HepG2 (cell line): ENCODE measurements at regions of chr17 and their contacts with region 1.

Region 1: DNA sequence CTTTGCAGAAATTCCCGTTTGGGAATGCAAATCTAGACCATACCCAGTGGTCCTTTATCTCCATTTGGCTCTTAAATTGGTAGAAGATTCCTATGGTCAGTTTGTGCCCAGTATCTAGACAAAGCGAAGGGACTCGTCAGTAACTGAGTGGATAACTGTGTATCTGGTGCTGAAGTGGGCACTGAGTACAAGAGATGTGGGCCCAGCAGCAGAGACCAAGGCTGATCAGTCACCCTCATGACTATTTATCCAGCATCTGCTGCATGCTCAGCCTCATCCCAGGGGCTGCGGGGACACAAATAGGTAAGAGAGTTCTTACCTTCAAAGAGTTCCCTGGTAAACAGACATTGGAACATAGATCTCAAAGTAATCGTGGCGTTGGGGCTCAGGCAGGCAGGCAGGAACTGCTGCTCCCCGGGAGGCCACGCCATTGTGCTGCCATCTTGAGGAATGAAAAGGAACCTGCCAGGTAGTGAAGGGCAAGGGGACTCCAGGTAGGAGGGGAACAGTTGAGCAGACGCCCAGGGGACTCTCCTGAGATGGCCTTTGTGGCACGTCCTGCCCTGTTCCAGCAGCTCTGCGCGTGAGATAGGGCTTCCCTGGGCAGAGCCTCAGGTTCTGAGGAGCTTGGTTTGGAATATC is 10.3 kb downstream of the NT5M start:
- DNase-seq: peak; percentile 67
- ATAC-seq: peak; percentile 97
- H3K4me3 ChIP-seq: 0 out of 6 replicates have a peak overlapping the region, but pooled peaks of 1 of the 3 experiments have one; percentile 10
- H3K27ac ChIP-seq: no peak overlapping the region
- H3K4me1 ChIP-seq: peaks cover 10% of the 10 kb centered on the region; the same call in 1 of the 2 replicates
- H3K27me3 ChIP-seq: no peaks in the 10 kb centered on the region
- CTCF ChIP-seq: peak; percentile 91
- EP300 ChIP-seq: no peak
- POLR2A ChIP-seq: no peak
- RAD21 ChIP-seq: peak; percentile 63

Region 2: GRCh38 chr17:17001874-17002520 is 311.5 kb before region 1 on chr17:
- CTCF ChIA-PET with region 1: interaction called, 6 read pairs
- POLR2A ChIA-PET with region 1: no interaction called
- in situ Hi-C with region 1: loop called (anchors 10 kb)
- intact Hi-C with region 1: loop called (anchors 5 kb)
- DNase-seq: peak; percentile 48
- ATAC-seq: peak; percentile 88
- H3K4me3 ChIP-seq: peak overlapping the region in 1 of 3 experiments; percentile 55; a peak in 1 of 6 replicates
- H3K27ac ChIP-seq: no peak overlapping the region
- H3K4me1 ChIP-seq: peaks cover 19% of the 10 kb centered on the region
- H3K27me3 ChIP-seq: peaks cover 0 to 22% of the 10 kb centered on the region in 2 experiments; a peak in 4 of 5 replicates
- CTCF ChIP-seq: peak; percentile 91
- EP300 ChIP-seq: no peak
- POLR2A ChIP-seq: no peak
- RAD21 ChIP-seq: peak; percentile 93

Region 3: DNA sequence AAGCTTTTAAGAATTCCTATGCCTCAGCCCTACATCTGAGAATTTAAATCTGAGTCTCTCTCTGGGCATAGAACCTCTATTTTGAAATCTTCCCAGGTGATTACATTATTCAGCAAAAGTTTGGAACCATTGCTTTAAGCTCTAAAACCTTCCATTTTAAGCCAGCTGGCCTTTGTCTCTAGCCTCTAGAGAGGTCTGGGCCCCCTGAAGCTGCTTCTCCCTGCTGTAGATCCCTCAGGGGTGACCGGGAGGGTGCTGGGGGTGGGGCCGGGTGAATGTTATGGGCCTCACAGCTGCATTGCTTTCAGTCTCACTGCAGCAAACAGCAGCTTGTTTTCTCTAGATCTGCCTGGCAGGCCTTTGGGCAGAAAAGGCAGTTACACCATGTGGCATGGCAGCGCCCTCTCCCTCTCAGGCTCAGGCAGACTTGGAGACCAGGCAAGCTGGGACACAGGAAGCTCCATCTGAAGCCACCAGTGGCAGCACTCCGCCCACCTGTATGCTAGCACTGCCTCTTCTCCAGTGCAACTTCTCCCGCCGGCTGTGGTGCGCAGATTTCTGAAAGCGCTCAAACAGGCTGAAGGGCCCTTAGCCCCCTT is 204.9 kb before region 1 on chr17:
- CTCF ChIA-PET with region 1: no interaction called
- POLR2A ChIA-PET with region 1: no interaction called
- in situ Hi-C with region 1: no loop called
- intact Hi-C with region 1: no loop called
- DNase-seq: no peak
- ATAC-seq: peak; percentile 20; the same call in 1 of the 3 replicates
- H3K4me3 ChIP-seq: no peak overlapping the region
- H3K27ac ChIP-seq: no peak overlapping the region
- H3K4me1 ChIP-seq: peaks cover 7% of the 10 kb centered on the region
- H3K27me3 ChIP-seq: no peaks in the 10 kb centered on the region
- CTCF ChIP-seq: peak; percentile 21; the same call in 1 of the 2 replicates
- EP300 ChIP-seq: no peak
- POLR2A ChIP-seq: no peak
- RAD21 ChIP-seq: no peak

Region 4: DNA sequence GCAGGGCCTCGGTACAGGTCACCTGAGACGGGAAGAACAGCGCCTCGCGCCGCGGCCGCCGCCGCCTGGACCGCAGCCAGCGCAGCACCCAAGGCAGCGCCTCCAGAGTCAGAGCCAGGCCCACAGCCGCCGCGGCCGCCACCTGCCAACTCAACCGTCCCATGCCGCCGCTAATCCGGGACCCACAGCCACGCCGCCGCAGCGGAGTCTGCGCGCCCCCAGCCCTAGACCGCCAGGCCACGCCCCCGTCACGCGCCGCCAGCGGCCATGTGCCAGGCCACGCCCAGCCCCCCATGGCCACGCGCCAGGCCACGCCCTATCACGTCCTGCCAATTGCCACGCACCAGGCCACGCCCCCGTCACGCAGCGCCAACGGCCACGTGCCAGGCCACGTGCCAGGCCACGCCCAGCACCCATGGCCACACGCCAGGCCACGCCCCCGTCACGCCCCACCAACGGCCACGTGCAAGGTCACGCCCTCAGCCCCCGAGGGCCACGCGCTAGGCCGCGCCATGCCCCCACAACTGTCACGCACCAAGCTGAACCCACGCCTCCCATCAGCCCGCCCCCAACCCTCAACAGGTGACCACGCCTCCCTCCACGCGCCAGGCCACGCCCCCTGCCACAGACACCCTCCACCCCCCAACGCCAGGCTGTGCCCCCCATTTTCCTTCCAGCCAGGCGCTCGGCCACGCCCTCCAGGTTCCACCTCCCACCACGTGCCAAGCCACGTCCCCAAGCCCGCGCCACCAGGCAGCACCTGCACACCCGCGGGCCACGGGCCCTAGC is 107.2 kb before region 1 on chr17 and contains the start of gene PLD6:
- CTCF ChIA-PET with region 1: no interaction called
- POLR2A ChIA-PET with region 1: no interaction called
- in situ Hi-C with region 1: no loop called
- intact Hi-C with region 1: loop called (anchors 10 kb)
- DNase-seq: peak; percentile 67
- ATAC-seq: peak; percentile 76
- H3K4me3 ChIP-seq: peak within 1 kb of the TSS; percentile 75 to 85 (median 80)
- H3K27ac ChIP-seq: peak within 1 kb of the TSS; percentile 75
- H3K4me1 ChIP-seq: peaks cover 38% of the 10 kb centered on the region
- H3K27me3 ChIP-seq: no peaks in the 10 kb centered on the region; a peak in 1 of 5 replicates
- CTCF ChIP-seq: no peak; the same call in 1 of the 2 replicates
- EP300 ChIP-seq: no peak
- POLR2A ChIP-seq: peak; percentile 63 to 69; a peak in 3 of 4 replicates
- RAD21 ChIP-seq: peak; percentile 48
- total RNA-seq, gene PLD6: 6.4 and 11.4 TPM in 2 replicates

Region 5: DNA sequence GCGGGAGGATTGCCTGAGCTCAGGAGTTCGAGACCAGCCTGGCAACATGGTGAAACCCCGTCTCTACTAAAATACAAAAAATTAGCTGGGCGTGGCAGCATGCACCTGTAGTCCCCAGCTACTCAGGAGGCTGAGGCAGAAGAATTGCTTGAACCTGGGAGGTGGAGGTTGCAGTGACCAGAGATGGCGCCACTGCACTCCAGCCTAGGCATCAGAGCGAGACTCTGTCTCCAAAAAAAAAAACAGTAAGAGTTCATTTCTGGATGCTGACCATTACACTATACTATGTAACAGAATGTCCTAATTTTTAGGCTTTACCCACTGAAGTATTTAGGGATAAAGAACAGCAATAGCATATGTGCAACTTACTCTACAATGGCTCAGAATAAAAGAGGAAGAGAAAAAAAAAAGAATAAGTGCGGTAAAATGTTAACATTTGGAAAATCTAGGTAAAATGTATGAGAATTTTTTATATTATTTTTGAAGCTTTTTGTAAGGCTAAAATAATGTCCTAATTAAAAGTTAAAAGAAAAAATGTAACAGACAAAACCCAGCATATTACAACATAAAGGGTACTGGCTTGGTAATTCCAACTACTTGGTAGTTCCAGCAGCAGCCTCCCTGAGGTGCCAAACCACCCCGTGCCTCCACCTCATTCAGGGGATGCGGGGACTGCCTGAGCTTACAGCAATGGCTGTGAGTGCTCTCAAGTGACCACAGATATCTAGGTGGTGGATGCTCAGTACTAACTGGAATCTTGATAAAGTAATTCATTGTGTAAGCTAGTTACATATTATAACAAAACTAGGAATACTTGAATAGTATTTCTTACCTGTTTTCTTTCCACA is 43.3 kb before region 1 on chr17:
- CTCF ChIA-PET with region 1: interaction called, 4 read pairs
- POLR2A ChIA-PET with region 1: no interaction called
- in situ Hi-C with region 1: no loop called
- intact Hi-C with region 1: loop called (anchors 5 kb)
- DNase-seq: peak; percentile 30
- ATAC-seq: peak; percentile 44; the same call in 1 of the 3 replicates
- H3K4me3 ChIP-seq: no peak overlapping the region
- H3K27ac ChIP-seq: no peak overlapping the region
- H3K4me1 ChIP-seq: no peaks in the 10 kb centered on the region
- H3K27me3 ChIP-seq: no peaks in the 10 kb centered on the region
- CTCF ChIP-seq: peak; percentile 44
- EP300 ChIP-seq: no peak
- POLR2A ChIP-seq: no peak
- RAD21 ChIP-seq: no peak

Region 6: GRCh38 chr17:17280613-17281549 is 32.6 kb before region 1 on chr17 and contains the start of gene COPS3:
- CTCF ChIA-PET with region 1: no interaction called
- POLR2A ChIA-PET with region 1: no interaction called
- in situ Hi-C with region 1: no loop called
- intact Hi-C with region 1: no loop called
- DNase-seq: peak; percentile 95
- ATAC-seq: peak; percentile 96
- H3K4me3 ChIP-seq: peak within 1 kb of the TSS; percentile 77 to 93 (median 89)
- H3K27ac ChIP-seq: peak within 1 kb of the TSS; percentile 90
- H3K4me1 ChIP-seq: peaks cover 36% of the 10 kb centered on the region
- H3K27me3 ChIP-seq: no peaks in the 10 kb centered on the region; a peak in 2 of 5 replicates
- CTCF ChIP-seq: no peak
- EP300 ChIP-seq: no peak
- POLR2A ChIP-seq: peak; percentile 83 to 85
- RAD21 ChIP-seq: peak; percentile 50
- total RNA-seq, gene COPS3: 103 and 143 TPM in 2 replicates